Activated CD4-positive, alpha-beta memory T cell treated with anti-CD3 and anti-CD28 coated beads, Interleukin-2, amount 10 ng/mL, durations not matched to agents 7 days and 5 days (primary cell): ENCODE measurements at regions of chr7 and their contacts with region 1.

Region 1: DNA sequence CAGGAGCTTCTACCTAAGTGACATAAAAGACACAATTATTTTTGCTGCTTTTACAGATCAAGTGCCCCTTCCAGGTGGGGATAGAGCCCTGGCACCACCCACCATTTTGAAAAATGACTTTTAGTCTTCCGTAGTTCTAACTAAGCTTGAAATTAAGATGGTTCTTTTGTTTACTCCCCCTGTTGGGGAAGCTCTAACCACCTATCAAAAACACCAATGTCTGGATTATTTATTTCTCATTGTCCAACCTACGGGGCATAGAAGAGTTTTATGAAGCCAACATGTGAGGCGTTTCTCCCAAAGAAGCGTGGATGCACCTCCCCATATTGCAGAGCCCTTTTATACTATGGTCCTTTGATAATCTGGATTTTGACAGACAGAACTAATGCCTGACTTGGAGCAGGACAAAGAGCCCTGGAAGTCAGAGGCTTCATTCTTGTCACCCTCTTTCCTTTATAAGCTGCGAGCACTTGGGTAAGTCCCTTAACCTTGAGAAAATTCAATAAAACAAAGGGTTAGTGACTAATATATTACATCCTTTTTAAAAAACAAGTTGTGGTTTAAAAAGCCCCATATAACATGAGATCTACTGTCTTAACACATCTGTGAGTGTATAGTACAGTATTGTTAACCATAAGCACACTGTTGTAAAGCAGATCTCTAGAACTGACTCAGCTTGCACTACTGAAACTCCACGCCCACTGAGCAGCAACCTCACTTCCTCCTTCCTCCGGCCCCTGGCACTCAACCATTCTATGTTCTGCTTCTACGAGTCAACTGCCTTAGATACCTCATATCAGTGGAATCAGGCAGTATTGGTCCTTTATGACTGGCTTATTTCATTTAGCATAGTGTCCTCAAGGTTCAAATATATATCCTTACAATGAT is 67.5 kb downstream of the ATXN7L1 start:
- DNase-seq: peak; percentile 88
- H3K4me3 Mint-ChIP-seq: peak overlapping the region; percentile 18
- H3K27ac Mint-ChIP-seq: peak overlapping the region; percentile 94
- H3K4me1 Mint-ChIP-seq: peaks cover 71% of the 10 kb centered on the region
- H3K27me3 Mint-ChIP-seq: peaks cover 3% of the 10 kb centered on the region

Region 2: DNA sequence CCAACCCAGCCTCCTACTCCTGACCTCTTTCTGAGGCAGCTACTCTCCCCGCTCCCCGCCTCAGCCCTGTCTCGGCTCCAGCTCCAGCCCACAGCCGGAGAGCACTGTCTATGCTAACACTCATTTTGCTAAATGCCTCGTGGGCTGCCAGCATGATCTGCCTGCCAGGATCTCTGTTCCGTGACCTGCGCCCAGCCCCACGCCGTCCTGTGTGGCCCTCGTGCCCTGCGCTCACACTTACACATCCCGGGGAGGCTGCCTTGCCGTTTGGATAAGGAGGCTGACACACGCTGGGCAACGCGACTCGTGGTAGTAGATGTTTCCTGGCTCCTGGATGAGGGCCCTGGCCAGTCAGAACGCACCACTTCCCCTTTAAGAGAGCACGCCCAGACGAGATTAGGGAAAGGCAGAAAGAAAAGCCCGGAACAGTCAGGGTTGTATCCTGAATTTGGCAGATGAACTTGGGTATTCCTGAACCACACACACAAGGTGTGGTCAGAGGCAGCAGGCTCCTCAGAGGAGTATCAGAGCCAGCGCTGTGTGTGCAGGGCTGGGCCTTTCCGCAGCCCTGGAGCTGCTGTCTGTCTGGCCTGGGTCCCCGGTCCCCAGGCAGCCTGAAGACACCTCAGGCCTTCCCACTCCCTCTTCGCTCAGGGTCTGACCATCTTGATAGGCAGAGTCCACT is 130.0 kb before region 1 on chr7:
- CTCF ChIA-PET with region 1: interaction called, 3 read pairs
- POLR2A ChIA-PET with region 1: interaction called, 51 read pairs
- DNase-seq: peak; percentile 35
- H3K4me3 Mint-ChIP-seq: peak overlapping the region; percentile 81
- H3K27ac Mint-ChIP-seq: peak overlapping the region; percentile 92
- H3K4me1 Mint-ChIP-seq: peaks cover 57% of the 10 kb centered on the region
- H3K27me3 Mint-ChIP-seq: no peaks in the 10 kb centered on the region

Region 3: GRCh38 chr7:105691733-105692564 is 117.0 kb before region 1 on chr7:
- CTCF ChIA-PET with region 1: interaction called, 4 read pairs
- POLR2A ChIA-PET with region 1: interaction called, 10 read pairs
- DNase-seq: peak; percentile 79
- H3K4me3 Mint-ChIP-seq: peak overlapping the region; percentile 74
- H3K27ac Mint-ChIP-seq: peak overlapping the region; percentile 92
- H3K4me1 Mint-ChIP-seq: peaks cover 37% of the 10 kb centered on the region
- H3K27me3 Mint-ChIP-seq: no peaks in the 10 kb centered on the region

Region 4: DNA sequence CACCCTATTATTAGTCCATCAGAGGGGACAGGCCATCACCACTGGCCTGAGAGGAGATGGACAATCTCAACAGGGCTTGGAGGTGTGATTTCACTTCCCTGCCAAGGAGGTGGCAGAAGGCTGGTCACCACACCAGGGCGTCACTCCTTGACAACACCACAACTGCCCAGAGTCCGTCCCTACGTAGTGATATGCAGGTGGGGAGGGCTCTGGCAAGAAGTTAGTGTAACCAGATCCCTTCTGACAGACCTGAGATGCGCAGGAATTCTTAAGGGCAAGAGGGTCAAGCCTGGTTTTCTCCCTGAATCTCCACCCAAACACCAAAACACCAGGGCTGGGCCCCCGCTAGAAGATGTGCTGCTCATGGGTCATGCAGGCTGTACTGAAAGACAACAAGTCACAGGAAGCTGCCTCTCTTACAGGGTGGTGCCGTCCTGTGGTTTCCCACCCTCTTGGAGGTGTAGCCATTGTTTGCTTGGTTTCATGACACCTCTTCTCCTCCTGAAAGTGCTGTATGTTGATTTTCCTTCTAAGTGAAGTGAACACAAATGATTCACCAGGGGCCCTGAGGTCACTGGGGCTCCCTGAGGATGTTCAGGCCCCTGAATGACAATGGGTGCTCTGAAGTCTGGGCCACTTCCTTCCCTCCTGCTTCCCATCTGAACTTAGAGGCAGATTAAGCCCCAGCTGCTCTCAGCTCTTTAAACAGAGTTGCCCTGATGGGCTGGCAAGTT is 40.3 kb after region 1 on chr7:
- CTCF ChIA-PET with region 1: interaction called, 9 read pairs
- POLR2A ChIA-PET with region 1: interaction called, 103 read pairs
- DNase-seq: peak; percentile 86
- H3K4me3 Mint-ChIP-seq: peak overlapping the region; percentile 56
- H3K27ac Mint-ChIP-seq: peak overlapping the region; percentile 85
- H3K4me1 Mint-ChIP-seq: peaks cover 65% of the 10 kb centered on the region
- H3K27me3 Mint-ChIP-seq: no peaks in the 10 kb centered on the region

Region 5: DNA sequence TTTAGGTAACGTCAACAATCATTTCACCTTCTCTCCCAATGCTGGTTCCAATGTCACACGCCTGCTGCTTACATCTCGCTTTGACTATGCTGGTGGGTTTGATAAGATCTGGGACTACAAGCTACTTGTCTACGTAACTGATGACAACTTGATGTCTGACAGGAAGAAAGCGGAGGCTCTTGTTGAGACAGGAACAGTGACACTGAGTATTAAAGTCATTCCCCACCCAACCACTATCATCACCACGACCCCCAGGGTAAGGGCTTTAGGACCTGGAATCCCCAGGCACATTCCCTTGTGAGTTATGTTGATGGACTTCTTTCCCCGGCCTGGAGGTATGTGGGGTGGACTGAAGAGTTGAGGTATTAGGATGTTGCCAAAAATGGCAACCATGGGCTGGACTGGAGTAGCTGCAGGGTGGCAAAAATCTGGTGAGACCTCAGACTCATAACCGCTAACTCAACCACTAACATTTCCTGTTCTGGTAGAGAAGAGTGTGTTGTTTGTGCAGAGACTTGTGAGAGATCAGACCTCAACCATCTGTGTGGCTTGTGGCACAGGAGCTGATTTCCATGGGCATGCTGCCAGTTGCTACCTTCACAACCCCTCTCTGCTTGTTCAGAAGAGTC is 213.4 kb after region 1 on chr7:
- CTCF ChIA-PET with region 1: interaction called, 3 read pairs
- POLR2A ChIA-PET with region 1: interaction called, 18 read pairs
- DNase-seq: peak; percentile 81
- H3K4me3 Mint-ChIP-seq: peak overlapping the region; percentile 34
- H3K27ac Mint-ChIP-seq: peak overlapping the region; percentile 67
- H3K4me1 Mint-ChIP-seq: peaks cover 43% of the 10 kb centered on the region
- H3K27me3 Mint-ChIP-seq: peaks cover 46% of the 10 kb centered on the region

Region 6: DNA sequence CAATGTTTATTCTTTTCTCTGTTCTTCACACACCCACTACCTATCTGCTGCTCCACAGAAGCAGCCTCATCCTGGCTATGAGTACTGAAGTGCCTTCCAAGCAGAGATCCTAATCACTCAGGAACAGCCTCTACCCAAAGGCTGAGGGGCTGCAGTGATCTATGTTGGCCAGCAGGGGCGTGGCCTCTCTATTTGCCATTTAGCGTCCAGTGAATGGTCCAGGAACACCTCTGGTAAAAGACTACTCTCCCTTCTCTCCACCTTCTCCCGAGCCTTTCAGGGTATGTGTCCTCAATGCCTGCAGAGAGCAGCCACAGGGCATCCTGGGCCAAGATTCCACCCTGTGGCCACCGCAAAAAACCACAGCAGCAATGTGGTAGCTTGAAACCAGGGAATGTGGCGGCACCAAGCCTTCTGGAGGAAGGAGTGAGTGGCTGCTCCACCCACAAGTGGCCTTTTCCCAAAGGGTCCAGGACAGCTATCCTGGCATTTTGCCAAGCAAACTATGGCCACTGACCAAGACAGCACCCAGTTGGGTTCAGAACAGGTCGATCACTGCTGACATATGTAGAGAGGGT is 232.3 kb after region 1 on chr7:
- CTCF ChIA-PET with region 1: no interaction called
- POLR2A ChIA-PET with region 1: no interaction called
- DNase-seq: peak; percentile 35
- H3K4me3 Mint-ChIP-seq: no peak overlapping the region
- H3K27ac Mint-ChIP-seq: no peak overlapping the region
- H3K4me1 Mint-ChIP-seq: peaks cover 7% of the 10 kb centered on the region
- H3K27me3 Mint-ChIP-seq: peaks cover 32% of the 10 kb centered on the region